ENCODE measurements at regions of chr2 and their contacts with region 1.

Region 1: GRCh38 chr2:16773080-16773713 is 107.6 kb upstream of the CYRIA start:
- DNase-seq: peak; percentile 36
- ATAC-seq: peak; percentile 89
- H3K4me3 ChIP-seq: no peak overlapping the region
- H3K27ac ChIP-seq: no peak overlapping the region
- H3K4me1 ChIP-seq: no peaks in the 10 kb centered on the region
- H3K27me3 ChIP-seq: peaks cover 33% of the 10 kb centered on the region
- CTCF ChIP-seq: peak; percentile 34 to 78 (median 67); a peak in 5 of 6 replicates
- POLR2A ChIP-seq: no peak
- RAD21 ChIP-seq: peak; percentile 87

Region 2: DNA sequence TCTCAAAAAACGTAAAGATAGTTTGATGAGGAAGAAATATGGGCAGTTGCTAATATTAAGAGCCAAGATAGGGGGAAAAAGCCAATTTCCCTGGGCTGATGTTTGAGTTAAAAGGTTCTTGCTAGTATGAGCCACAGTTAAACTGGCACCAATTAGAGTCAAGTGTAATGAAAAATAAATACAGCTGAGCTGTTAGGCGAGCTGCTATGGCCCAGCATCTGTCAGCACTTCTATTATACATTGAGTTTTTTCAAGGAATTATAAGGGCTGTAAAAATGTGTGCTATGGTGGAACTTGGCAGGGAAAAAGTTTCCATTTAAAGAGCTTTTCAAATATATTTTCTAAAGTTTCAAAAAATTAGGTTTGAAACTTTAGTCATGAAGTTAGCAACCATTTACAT is 387.2 kb before region 1 on chr2:
- CTCF ChIA-PET with region 1: no interaction called
- POLR2A ChIA-PET with region 1: no interaction called
- RAD21 ChIA-PET with region 1: no interaction called
- intact Hi-C with region 1: no loop called
- DNase-seq: no peak
- ATAC-seq: no peak
- H3K4me3 ChIP-seq: no peak overlapping the region
- H3K27ac ChIP-seq: no peak overlapping the region
- H3K4me1 ChIP-seq: no peaks in the 10 kb centered on the region
- H3K27me3 ChIP-seq: no peaks in the 10 kb centered on the region
- CTCF ChIP-seq: no peak
- POLR2A ChIP-seq: no peak
- RAD21 ChIP-seq: no peak

Region 3: DNA sequence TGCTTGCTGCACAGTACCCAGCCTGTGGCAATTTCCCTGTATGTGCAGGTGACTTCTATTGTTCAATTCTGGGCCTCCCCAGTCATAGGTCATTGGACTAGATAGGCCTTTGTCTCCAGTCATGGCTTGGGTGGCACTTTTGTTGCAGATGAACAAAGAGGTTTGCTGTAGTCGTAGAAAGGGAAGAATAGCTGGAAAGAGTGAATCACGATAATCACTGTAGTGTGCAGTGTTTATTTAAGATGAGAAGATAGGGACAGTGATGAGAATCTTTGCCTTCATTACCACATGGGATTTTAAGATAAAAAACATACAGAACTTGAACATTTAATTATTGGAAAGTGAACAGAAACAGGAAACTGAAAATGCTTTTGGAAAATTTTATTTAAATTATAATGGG is 48.5 kb after region 1 on chr2:
- CTCF ChIA-PET with region 1: no interaction called
- POLR2A ChIA-PET with region 1: no interaction called
- RAD21 ChIA-PET with region 1: no interaction called
- intact Hi-C with region 1: no loop called
- DNase-seq: no peak
- ATAC-seq: no peak
- H3K4me3 ChIP-seq: no peak overlapping the region
- H3K27ac ChIP-seq: no peak overlapping the region
- H3K4me1 ChIP-seq: no peaks in the 10 kb centered on the region
- H3K27me3 ChIP-seq: 0 out of 2 replicates have a peak, but pooled peaks cover 11% of the 10 kb centered on the region
- CTCF ChIP-seq: no peak
- POLR2A ChIP-seq: no peak
- RAD21 ChIP-seq: no peak

Region 4: DNA sequence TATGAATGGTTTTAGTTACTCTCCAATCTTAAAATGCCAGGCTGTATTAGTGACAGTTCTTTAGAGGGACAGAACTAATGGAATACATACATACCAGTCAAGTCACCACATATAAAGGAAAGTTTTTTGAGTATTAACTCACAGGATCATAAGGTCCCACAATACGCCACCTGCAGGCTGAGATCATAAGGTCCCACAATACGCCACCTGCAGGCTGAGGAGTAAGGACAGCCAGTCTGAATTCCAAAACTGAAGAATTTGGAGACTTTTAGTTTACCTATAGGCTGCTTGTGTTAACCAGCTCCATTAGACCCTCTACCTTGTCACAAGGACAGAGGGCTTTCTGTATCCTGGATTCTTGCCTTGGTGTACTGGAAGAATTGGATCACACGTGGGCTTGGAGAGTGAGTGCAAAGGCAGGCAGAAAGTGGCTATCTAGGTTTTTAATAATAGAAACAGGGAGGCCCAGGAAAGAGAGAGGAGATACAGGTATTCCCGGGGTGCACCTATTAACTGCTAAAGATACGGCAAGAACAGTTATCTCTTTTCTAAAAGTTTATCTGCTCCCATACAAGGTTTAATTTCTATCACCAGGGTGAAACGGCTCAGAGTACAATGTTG is 127.3 kb after region 1 on chr2:
- CTCF ChIA-PET with region 1: no interaction called
- POLR2A ChIA-PET with region 1: no interaction called
- RAD21 ChIA-PET with region 1: no interaction called
- intact Hi-C with region 1: loop called (anchors 1 kb)
- DNase-seq: peak; percentile 45
- ATAC-seq: peak; percentile 82
- H3K4me3 ChIP-seq: no peak overlapping the region
- H3K27ac ChIP-seq: no peak overlapping the region
- H3K4me1 ChIP-seq: no peaks in the 10 kb centered on the region
- H3K27me3 ChIP-seq: no peaks in the 10 kb centered on the region
- CTCF ChIP-seq: peak; percentile 97 to 99 (median 98)
- POLR2A ChIP-seq: no peak
- RAD21 ChIP-seq: peak; percentile 53

Region 5: GRCh38 chr2:17148407-17149145 is 375.4 kb after region 1 on chr2:
- CTCF ChIA-PET with region 1: no interaction called
- POLR2A ChIA-PET with region 1: no interaction called
- RAD21 ChIA-PET with region 1: no interaction called
- intact Hi-C with region 1: loop called (anchors 2 kb)
- DNase-seq: peak; percentile 8
- ATAC-seq: peak; percentile 81
- H3K4me3 ChIP-seq: no peak overlapping the region
- H3K27ac ChIP-seq: no peak overlapping the region
- H3K4me1 ChIP-seq: no peaks in the 10 kb centered on the region
- H3K27me3 ChIP-seq: peaks cover 14% of the 10 kb centered on the region
- CTCF ChIP-seq: peak in 2 of 3 experiments; percentile 56 to 60; a peak in 4 of 6 replicates
- POLR2A ChIP-seq: no peak
- RAD21 ChIP-seq: peak; percentile 48

Region 6: DNA sequence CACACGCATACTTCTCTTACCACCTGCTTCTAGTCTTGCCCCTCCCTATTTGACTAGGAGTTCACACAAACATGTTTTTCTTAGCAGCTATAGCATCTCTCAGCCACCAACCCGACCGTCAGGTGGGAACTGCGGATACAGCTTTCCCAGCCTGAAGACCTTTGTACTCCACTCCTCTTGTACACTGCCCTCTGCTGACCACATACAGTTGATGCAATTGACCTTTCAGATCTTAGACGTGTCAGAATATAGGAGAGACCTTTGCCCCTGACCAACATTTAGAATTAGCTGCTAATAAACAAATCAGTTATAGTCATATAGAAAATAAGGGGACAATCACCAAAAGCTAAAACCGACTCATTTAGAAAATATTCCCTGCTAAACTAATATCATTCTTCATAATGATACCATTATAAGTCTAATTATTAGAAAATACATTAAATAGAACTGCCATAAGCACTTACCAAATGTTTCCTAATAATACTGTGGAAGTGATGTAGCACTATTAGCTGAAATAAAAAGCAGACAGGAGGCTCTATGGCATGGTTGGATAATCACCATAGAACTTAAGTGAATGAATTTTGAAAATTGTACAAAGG is 536.6 kb after region 1 on chr2:
- CTCF ChIA-PET with region 1: interaction called, 8 read pairs
- POLR2A ChIA-PET with region 1: no interaction called
- RAD21 ChIA-PET with region 1: no interaction called
- intact Hi-C with region 1: loop called (anchors 2 kb)
- DNase-seq: peak; percentile 63
- ATAC-seq: peak; percentile 99
- H3K4me3 ChIP-seq: no peak overlapping the region
- H3K27ac ChIP-seq: no peak overlapping the region
- H3K4me1 ChIP-seq: no peaks in the 10 kb centered on the region
- H3K27me3 ChIP-seq: no peaks in the 10 kb centered on the region; the same call in 1 of the 2 replicates
- CTCF ChIP-seq: peak; percentile 49 to 79 (median 75); a peak in 5 of 6 replicates
- POLR2A ChIP-seq: no peak
- RAD21 ChIP-seq: peak; percentile 70

Region 7: GRCh38 chr2:17573085-17573803 is 800.0 kb after region 1 on chr2:
- CTCF ChIA-PET with region 1: interaction called, 3 read pairs
- POLR2A ChIA-PET with region 1: no interaction called
- RAD21 ChIA-PET with region 1: no interaction called
- intact Hi-C with region 1: loop called (anchors 2 kb)
- DNase-seq: no peak
- ATAC-seq: peak; percentile 63
- H3K4me3 ChIP-seq: no peak overlapping the region
- H3K27ac ChIP-seq: no peak overlapping the region
- H3K4me1 ChIP-seq: peaks cover 0 to 17% of the 10 kb centered on the region in 2 experiments; a peak in 3 of 4 replicates
- H3K27me3 ChIP-seq: no peaks in the 10 kb centered on the region
- CTCF ChIP-seq: peak; percentile 12 to 46 (median 44); a peak in 3 of 6 replicates
- POLR2A ChIP-seq: no peak
- RAD21 ChIP-seq: peak; percentile 72

Region 8: DNA sequence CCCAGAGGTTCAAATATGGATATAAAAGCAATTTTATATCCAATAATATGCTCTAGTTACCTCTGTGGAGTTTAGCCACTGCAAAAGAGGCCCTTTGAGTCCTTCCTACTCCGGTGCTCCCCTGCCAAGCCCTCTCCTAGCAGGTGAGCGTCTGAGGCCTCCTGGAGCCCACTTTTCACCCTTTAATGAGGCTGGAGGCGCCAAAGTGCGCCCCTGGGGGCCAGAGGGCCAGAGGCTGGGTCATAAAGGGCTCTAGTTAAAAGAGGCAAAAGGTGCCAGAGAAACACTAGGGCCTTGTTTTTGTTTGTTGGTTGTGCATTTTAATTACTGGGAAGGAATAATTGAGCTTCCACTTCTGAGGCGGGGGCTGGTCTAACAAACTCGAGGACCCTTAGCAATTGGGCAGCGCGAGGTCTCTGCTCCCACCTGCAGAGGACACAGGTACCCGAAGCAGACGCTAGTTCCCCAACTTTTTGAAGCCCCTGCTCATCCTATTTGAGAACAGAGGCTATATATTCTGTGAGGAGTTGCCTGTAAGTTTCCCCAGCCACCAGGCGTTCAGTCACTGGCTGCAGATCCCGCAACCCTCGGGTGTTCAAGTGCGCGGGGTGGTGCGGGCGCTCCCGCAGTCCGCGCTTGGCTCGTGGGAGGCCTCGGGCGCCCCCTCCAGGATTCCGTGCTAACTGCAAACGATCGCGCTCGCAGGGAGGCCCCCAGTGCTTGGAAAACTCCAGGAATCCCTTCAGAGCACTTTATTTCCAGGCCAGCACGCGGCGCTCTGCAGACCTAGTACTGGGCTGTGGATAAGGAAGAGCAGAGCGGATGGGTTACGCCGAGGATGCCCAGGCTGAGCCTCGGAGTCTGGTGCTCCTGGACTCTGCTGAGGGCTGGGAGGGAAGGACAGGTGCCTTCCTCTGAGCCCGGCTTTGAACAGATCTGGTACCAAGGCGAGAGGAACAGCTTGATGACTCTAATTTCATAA is 1057.1 kb after region 1 on chr2:
- CTCF ChIA-PET with region 1: no interaction called
- POLR2A ChIA-PET with region 1: no interaction called
- RAD21 ChIA-PET with region 1: no interaction called
- intact Hi-C with region 1: loop called (anchors 5 kb)
- DNase-seq: peak; percentile 82
- ATAC-seq: peak; percentile 100
- H3K4me3 ChIP-seq: peak overlapping the region in 1 of 2 experiments; percentile 40; a peak in 3 of 4 replicates
- H3K27ac ChIP-seq: no peak overlapping the region
- H3K4me1 ChIP-seq: peaks cover 0 to 10% of the 10 kb centered on the region in 2 experiments; a peak in 1 of 4 replicates
- H3K27me3 ChIP-seq: no peaks in the 10 kb centered on the region
- CTCF ChIP-seq: peak; percentile 94 to 98 (median 97)
- POLR2A ChIP-seq: no peak
- RAD21 ChIP-seq: peak; percentile 74